ENCODE measurements at regions of chr7 and their contacts with region 1.

Region 1: GRCh38 chr7:44490351-44491200 is at the start of gene NUDCD3:
- DNase-seq: peak; percentile 86
- H3K4me3 Mint-ChIP-seq: peak within 1 kb of the TSS; percentile 81
- H3K27ac Mint-ChIP-seq: peak within 1 kb of the TSS; percentile 85
- H3K4me1 Mint-ChIP-seq: peaks cover 43% of the 10 kb centered on the region
- H3K27me3 Mint-ChIP-seq: peaks cover 5% of the 10 kb centered on the region
- total RNA-seq, gene NUDCD3: 91.0 to 97.5 TPM

Region 2: GRCh38 chr7:44257618-44258422 is 232.8 kb before region 1 on chr7:
- CTCF ChIA-PET with region 1: interaction called, 4 read pairs
- POLR2A ChIA-PET with region 1: interaction called, 20 read pairs
- DNase-seq: peak; percentile 81
- H3K4me3 Mint-ChIP-seq: peak overlapping the region; percentile 11
- H3K27ac Mint-ChIP-seq: peak overlapping the region; percentile 93
- H3K4me1 Mint-ChIP-seq: peaks cover 29% of the 10 kb centered on the region
- H3K27me3 Mint-ChIP-seq: no peaks in the 10 kb centered on the region

Region 3: DNA sequence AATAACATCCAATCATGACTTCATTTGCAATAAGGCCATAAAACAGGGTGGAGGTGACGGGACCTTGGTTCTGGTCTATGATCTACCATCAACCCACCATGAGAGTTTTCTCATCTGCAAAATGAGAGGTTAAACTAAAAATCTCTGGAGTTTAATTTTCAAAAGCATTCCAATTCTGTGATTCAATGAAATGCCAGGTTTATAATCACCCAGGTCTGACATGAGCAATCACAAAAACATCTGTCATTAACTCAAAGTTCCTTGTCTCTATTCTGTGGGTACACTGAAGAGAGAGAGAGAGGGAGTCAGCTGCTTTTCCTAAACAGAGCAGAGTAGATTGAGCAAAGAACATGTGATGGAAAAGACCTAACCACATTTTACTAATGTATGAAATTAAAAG is 75.5 kb before region 1 on chr7:
- CTCF ChIA-PET with region 1: no interaction called
- POLR2A ChIA-PET with region 1: no interaction called
- DNase-seq: no peak
- H3K4me3 Mint-ChIP-seq: no peak overlapping the region
- H3K27ac Mint-ChIP-seq: no peak overlapping the region
- H3K4me1 Mint-ChIP-seq: peaks cover 7% of the 10 kb centered on the region
- H3K27me3 Mint-ChIP-seq: no peaks in the 10 kb centered on the region

Region 4: GRCh38 chr7:44477063-44477830 is 13.3 kb before region 1 on chr7:
- CTCF ChIA-PET with region 1: interaction called, 15 read pairs
- POLR2A ChIA-PET with region 1: interaction called, 8 read pairs
- DNase-seq: peak; percentile 75
- H3K4me3 Mint-ChIP-seq: no peak overlapping the region
- H3K27ac Mint-ChIP-seq: peak overlapping the region; percentile 19
- H3K4me1 Mint-ChIP-seq: peaks cover 24% of the 10 kb centered on the region
- H3K27me3 Mint-ChIP-seq: no peaks in the 10 kb centered on the region

Region 5: DNA sequence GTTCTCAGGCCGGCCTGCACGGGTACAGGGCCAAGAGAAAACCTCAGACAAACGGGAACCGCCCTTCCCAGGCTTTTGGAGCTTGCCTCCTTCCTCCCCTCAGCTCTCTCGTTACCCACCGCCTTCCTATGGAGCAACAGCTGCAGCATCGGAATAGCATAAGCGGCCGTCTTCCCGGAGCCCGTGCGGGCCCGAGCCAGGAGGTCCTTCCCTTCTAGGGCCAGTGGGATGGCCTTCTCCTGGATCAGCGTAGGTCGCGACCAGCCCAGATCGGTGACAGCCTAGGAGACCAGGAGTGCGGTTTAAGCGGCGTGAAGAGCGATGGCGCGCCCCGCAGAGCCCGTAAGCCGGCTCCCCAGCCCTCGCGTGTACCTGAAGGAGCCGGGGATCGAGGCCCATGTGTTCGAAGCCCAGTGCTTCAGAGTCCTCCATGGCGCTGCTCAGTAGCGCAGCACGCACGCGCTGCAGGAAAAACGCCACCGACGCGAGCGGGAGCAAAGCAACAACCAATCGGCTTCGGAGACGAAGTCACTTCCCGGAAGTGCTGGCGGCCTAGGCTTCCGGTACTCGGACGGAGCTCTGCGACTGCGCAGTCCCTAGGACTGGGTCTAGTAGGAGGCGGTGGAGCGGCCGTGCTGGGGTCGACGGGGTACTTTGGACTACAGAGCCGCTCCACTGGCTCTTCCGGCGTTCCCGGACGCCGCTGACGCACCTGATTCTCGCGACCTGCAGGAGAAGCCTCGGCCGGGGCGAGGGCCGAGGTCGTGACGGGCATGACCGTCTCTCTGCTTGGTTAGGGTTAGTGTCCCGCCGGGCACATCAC is 83.1 kb after region 1 on chr7 and contains the start of gene DDX56:
- CTCF ChIA-PET with region 1: no interaction called
- POLR2A ChIA-PET with region 1: interaction called, 33 read pairs
- DNase-seq: peak; percentile 94
- H3K4me3 Mint-ChIP-seq: peak within 1 kb of the TSS; percentile 96
- H3K27ac Mint-ChIP-seq: peak within 1 kb of the TSS; percentile 87
- H3K4me1 Mint-ChIP-seq: peaks cover 44% of the 10 kb centered on the region
- H3K27me3 Mint-ChIP-seq: no peaks in the 10 kb centered on the region
- total RNA-seq, gene DDX56: 59.0 to 59.6 TPM

Region 6: GRCh38 chr7:44797329-44798251 is 307.0 kb after region 1 on chr7:
- CTCF ChIA-PET with region 1: no interaction called
- POLR2A ChIA-PET with region 1: interaction called, 11 read pairs
- DNase-seq: peak; percentile 89
- H3K4me3 Mint-ChIP-seq: peak overlapping the region; percentile 81
- H3K27ac Mint-ChIP-seq: peak overlapping the region; percentile 93
- H3K4me1 Mint-ChIP-seq: peaks cover 44% of the 10 kb centered on the region
- H3K27me3 Mint-ChIP-seq: no peaks in the 10 kb centered on the region

Region 7: DNA sequence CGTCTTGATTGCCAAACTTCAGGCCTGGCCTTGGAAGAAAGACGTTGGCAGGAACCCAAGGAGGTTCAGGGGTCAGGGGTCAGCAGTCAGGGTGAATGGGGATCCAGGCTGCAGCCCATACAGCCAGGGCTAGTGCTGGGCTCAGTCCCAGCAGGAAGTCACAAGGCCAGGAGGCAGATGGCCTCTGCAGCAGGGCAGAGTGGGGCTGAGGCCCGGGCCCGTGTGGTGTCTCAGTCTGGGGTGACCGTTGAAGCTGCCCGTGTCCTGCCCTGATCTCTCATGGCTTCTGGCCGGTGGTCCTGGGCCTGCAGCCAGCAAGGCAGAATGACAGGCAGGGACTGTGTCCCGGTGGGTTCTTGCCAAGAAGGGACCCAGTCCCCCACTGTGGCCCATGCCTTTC is 421.3 kb after region 1 on chr7:
- CTCF ChIA-PET with region 1: no interaction called
- POLR2A ChIA-PET with region 1: no interaction called
- DNase-seq: no peak
- H3K4me3 Mint-ChIP-seq: no peak overlapping the region
- H3K27ac Mint-ChIP-seq: no peak overlapping the region
- H3K4me1 Mint-ChIP-seq: peaks cover 9% of the 10 kb centered on the region
- H3K27me3 Mint-ChIP-seq: no peaks in the 10 kb centered on the region